Heart left ventricle (tissue), 16 donors: ENCODE measurements at regions of chr6 and their contacts with region 1.

Region 1: DNA sequence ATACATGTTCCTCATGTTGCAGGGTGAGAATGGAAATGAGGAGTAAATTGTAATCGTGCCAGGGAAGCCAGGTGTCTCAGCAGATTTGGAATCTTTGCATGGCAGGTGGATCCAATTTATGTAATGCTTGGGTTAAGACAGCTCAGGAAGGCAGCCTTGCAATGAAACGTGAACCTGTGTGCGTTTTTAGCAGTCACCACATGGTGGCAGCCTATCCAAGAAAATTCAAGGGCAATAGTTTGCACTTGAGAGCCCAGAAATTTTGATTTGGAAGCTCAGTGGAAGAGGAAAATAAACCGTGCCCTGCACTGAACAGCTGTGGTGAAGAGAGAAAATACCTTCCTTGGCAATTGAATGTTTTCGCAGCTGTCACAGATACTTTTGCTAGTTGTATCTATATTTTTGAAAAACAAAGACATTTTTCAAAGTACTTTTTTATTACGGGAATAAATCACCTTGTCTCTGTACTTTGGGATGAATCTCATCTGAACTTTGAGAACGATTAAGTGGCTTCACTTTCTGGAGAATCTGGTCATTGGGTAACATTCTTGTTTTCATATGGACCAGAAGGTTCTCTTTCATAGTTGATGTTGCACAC is 26.5 kb downstream of the MTHFD1L start:
- DNase-seq: peak in 4 of 5 donors; percentile 44 to 70 (median 60)
- ATAC-seq: peak; percentile 56 to 80 (median 78)
- H3K4me3 ChIP-seq: no peak overlapping the region
- H3K27ac ChIP-seq: no peak overlapping the region
- H3K4me1 ChIP-seq: peaks cover 0 to 19% (median 7%) of the 10 kb centered on the region in 12 donors
- H3K27me3 ChIP-seq: no peaks in the 10 kb centered on the region
- CTCF ChIP-seq: peak; percentile 79 to 90 (median 86)
- POLR2A ChIP-seq: no peak

Region 2: GRCh38 chr6:150949526-150949925 is 57.5 kb after region 1 on chr6:
- intact Hi-C with region 1: no loop called
- DNase-seq: no peak
- ATAC-seq: no peak
- H3K4me3 ChIP-seq: no peak overlapping the region
- H3K27ac ChIP-seq: no peak overlapping the region
- H3K4me1 ChIP-seq: no peaks in the 10 kb centered on the region
- H3K27me3 ChIP-seq: no peaks in the 10 kb centered on the region
- CTCF ChIP-seq: no peak
- POLR2A ChIP-seq: no peak

Region 3: GRCh38 chr6:151004415-151005024 is 112.5 kb after region 1 on chr6:
- intact Hi-C with region 1: loop called in 1 of 10 experiments (anchors 5 kb)
- DNase-seq: peak in 2 of 5 donors; percentile 22 to 36
- ATAC-seq: peak; percentile 68 to 83 (median 80)
- H3K4me3 ChIP-seq: peak overlapping the region in 3 of 12 donors; percentile 1 to 31 (median 25)
- H3K27ac ChIP-seq: peak overlapping the region; percentile 0 to 81 (median 67)
- H3K4me1 ChIP-seq: peaks cover 0 to 34% (median 9%) of the 10 kb centered on the region in 12 donors
- H3K27me3 ChIP-seq: no peaks in the 10 kb centered on the region
- CTCF ChIP-seq: no peak
- POLR2A ChIP-seq: no peak

Region 4: DNA sequence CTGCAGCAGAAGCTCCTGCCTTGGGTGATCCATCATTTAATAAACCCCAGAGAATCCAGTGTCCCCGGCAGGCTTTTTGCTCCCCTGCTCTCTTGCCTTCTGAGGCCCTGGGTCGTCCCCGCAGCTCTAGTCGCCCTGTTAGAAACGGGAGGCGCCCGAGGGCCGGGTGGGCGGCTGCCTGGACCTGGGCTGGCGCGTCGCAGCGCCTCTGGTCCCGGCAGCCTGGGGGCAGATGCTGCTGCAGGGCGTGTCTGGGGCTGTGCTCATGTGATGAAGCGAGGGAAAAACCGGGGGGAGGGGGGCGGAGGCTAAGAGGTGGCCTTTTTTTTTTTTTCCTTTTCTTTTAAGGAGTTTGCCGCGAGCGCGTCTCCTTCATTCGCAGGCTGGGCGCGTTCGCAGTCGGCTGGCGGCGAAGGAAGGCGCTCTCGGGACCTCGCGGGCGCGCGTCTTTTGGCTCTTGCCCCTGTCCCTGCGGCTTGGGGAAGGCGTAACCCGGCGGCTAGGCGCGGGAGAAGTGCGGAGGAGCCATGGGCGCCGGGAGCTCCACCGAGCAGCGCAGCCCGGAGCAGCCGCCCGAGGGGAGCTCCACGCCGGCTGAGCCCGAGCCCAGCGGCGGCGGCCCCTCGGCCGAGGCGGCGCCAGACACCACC is 348.2 kb after region 1 on chr6:
- intact Hi-C with region 1: loop called in 1 of 10 experiments (anchors 5 kb)
- DNase-seq: peak; percentile 80 to 90 (median 83)
- ATAC-seq: peak; percentile 81 to 91 (median 90)
- H3K4me3 ChIP-seq: peak overlapping the region; percentile 62 to 90 (median 72)
- H3K27ac ChIP-seq: peak overlapping the region; percentile 52 to 97 (median 78)
- H3K4me1 ChIP-seq: peaks cover 0 to 19% (median 5%) of the 10 kb centered on the region in 12 donors
- H3K27me3 ChIP-seq: peaks cover 0 to 45% (median 0%) of the 10 kb centered on the region in 9 donors
- CTCF ChIP-seq: peak in 3 of 12 donors; percentile 8 to 35 (median 24)
- POLR2A ChIP-seq: peak in 1 of 2 donors; percentile 41

Region 5: GRCh38 chr6:151330134-151330696 is 438.2 kb after region 1 on chr6:
- intact Hi-C with region 1: loop called (anchors 1 to 5 kb)
- DNase-seq: no peak
- ATAC-seq: no peak
- H3K4me3 ChIP-seq: no peak overlapping the region
- H3K27ac ChIP-seq: peak overlapping the region in 1 of 12 donors; percentile 43
- H3K4me1 ChIP-seq: peaks cover 0 to 11% (median 6%) of the 10 kb centered on the region in 12 donors
- H3K27me3 ChIP-seq: peaks cover 0 to 6% (median 0%) of the 10 kb centered on the region in 9 donors
- CTCF ChIP-seq: no peak
- POLR2A ChIP-seq: no peak

Region 6: DNA sequence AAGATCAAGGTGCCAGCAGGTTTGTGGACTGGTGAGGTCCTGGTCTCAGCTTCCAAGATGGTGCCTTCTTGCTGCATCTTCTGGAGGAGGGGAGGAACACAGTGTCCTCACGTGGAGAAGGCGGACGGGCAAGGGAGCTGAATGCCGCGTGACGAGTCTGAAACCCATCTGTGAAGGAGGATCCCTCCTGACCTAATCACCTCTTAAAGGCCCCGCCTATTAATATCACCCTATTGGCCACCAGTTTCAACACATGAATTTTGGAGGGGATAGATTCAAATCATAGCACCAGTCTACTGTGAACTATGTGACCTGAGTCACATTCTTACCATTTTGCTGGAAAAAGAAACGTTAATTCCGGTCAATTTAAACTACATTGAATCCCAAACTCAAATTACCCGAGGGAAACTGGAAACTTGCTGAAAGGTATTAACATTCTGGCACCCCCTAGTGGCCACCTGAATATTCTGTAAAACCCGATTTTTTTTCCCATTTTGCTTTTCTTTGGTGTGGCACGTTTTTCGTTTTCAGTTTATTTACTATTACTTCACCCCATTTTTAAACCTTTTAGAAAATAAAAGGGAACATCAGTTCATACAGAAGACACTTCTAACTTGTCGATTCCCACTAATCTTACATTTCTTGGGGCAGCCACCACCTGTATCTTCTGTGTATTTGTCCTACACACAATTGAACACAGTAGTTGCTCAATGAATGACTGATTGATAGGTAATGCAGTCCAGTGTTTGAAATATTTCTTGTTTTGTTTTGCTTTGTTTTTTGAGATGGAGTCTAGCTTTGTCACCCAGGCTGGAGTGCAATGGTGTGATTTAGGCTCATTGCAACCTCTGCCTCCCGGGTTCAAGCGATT is 583.9 kb after region 1 on chr6:
- intact Hi-C with region 1: loop called in 1 of 10 experiments (anchors 10 kb)
- DNase-seq: peak in 2 of 5 donors; percentile 25 to 30
- ATAC-seq: peak in 1 of 4 donors; percentile 46
- H3K4me3 ChIP-seq: peak overlapping the region in 4 of 12 donors; percentile 2 to 28 (median 10)
- H3K27ac ChIP-seq: no peak overlapping the region
- H3K4me1 ChIP-seq: peaks cover 0 to 10% (median 0%) of the 10 kb centered on the region in 12 donors
- H3K27me3 ChIP-seq: no peaks in the 10 kb centered on the region
- CTCF ChIP-seq: peak; percentile 74 to 93 (median 84)
- POLR2A ChIP-seq: no peak